Ovary (tissue), 10 donors: ENCODE measurements at regions of chr11 and their contacts with region 1.

Region 1: DNA sequence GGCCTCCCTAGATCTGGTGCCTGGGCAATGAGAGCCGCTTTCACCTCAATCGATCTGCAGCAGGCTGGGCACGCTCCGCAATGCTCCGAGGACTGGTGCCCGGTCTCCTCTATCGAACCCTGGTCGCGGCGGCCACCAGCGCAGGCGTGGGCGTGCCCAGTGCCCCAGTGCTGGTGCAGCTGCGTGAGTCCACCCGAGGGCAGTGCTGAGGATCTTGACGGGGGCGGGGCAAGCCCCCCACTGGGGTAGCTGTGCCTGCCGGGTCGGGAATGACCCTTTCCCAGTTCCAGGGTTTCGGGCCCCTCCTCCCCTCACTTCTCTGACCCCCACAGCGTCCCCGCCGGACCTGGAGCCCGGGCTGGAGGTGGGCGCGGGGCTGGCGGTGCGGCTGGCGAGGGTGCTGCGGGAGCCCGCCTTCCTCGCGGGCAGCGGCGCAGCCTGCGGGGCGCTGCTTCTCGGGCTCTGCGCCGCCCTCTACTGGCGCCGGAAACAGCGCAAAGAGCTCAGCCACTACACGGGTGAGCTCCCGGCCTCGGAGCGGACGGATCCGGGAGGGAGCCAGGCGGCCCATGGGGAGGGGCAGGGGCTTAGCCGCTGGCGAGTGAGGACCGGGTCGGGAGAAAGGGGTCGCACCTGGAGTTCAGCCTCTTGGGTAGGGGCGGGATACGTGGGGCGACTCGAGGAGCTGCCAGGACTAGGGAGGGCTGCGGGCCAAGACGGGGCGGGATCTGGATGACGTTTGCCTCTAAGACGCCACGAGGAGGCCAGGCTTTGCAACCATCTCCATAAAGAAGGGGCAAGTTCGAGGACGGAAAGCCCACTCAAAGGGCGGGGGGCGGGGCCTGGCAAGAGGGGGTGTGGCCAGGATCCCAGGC is 10.9 kb downstream of the ROBO3 start:
- DNase-seq: peak; percentile 94 to 96 (median 96)
- H3K4me3 ChIP-seq: peak overlapping the region; percentile 67
- H3K27ac ChIP-seq: peak overlapping the region; percentile 90 to 96
- H3K4me1 ChIP-seq: peaks cover 9% of the 10 kb centered on the region
- H3K27me3 ChIP-seq: no peaks in the 10 kb centered on the region
- CTCF ChIP-seq: peak; percentile 94 to 95 (median 94)
- EP300 ChIP-seq: no peak
- POLR2A ChIP-seq: peak; percentile 47

Region 2: DNA sequence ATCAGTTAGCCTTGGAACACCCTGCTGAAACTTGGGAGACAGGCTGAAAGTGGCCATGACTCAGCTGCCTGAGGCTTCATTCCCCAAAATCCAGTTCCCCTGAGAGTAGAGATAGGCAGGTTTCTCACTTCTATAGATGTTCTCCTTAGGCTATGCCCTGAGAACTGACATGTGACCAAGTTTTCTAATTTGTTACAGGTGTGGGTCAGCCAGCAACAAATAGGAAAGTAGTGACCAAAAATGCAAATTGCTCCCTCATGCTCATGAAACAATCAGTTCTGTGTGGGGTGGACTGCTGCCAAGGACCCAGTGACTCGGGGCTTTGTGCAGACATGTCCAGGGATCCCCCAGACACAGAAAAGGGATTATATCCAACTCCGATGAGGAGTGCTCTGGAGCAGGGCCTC is 70.6 kb after region 1 on chr11:
- intact Hi-C with region 1: loop called in 3 of 4 experiments (anchors 5 to 10 kb)
- DNase-seq: no peak
- H3K4me3 ChIP-seq: no peak overlapping the region
- H3K27ac ChIP-seq: no peak overlapping the region
- H3K4me1 ChIP-seq: no peaks in the 10 kb centered on the region
- H3K27me3 ChIP-seq: no peaks in the 10 kb centered on the region
- CTCF ChIP-seq: no peak
- EP300 ChIP-seq: no peak
- POLR2A ChIP-seq: no peak

Region 3: DNA sequence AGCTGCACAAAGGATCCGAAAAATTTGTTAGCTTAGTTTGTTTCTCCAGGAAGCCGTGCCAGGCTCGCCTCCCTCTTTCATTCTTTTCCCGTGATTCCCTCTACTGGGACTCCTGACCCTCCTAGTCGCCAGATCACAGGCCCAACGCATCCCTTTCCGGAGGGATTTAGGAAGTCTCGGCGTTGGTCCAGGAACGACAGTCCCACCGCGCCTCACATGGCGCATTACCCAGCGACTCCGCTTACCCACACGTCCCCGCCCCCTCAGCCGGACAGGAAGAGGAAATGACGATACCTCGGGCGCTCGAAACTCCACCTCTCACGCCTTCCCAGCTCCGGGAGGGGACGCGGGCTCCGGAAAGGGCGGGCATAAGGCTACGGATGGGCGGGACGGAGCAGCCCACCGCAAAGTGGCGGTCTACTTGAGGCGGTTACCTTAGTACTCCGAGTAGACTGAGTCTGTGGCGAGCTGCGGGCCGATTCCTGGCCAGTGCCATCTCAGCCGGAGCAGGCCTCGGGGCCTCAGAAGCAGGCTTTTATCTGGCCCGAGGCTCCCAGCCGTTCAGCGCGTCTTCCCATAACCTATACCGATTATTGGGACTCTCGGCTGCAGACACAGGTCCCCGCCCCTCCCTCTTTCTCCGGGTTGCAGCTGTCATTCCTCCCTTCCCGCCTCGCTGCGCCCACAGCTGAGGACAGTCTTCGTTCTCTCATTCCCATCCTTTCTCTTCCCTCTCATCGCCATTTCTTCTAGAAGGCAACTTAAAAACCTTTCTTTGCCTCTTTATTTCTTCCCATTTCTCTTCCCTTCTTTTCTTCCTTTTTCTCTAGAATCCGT is 77.8 kb after region 1 on chr11 and contains the start of gene CCDC15:
- intact Hi-C with region 1: loop called (anchors 2 to 10 kb)
- DNase-seq: peak; percentile 96 to 97 (median 96)
- H3K4me3 ChIP-seq: peak within 1 kb of the TSS; percentile 55
- H3K27ac ChIP-seq: peak within 1 kb of the TSS in 1 of 2 donors; percentile 70
- H3K4me1 ChIP-seq: peaks cover 2% of the 10 kb centered on the region
- H3K27me3 ChIP-seq: no peaks in the 10 kb centered on the region
- CTCF ChIP-seq: no peak
- EP300 ChIP-seq: no peak
- POLR2A ChIP-seq: peak; percentile 97
- total RNA-seq, gene CCDC15: 0.87 to 1.9 (median 1.4) TPM

Region 4: DNA sequence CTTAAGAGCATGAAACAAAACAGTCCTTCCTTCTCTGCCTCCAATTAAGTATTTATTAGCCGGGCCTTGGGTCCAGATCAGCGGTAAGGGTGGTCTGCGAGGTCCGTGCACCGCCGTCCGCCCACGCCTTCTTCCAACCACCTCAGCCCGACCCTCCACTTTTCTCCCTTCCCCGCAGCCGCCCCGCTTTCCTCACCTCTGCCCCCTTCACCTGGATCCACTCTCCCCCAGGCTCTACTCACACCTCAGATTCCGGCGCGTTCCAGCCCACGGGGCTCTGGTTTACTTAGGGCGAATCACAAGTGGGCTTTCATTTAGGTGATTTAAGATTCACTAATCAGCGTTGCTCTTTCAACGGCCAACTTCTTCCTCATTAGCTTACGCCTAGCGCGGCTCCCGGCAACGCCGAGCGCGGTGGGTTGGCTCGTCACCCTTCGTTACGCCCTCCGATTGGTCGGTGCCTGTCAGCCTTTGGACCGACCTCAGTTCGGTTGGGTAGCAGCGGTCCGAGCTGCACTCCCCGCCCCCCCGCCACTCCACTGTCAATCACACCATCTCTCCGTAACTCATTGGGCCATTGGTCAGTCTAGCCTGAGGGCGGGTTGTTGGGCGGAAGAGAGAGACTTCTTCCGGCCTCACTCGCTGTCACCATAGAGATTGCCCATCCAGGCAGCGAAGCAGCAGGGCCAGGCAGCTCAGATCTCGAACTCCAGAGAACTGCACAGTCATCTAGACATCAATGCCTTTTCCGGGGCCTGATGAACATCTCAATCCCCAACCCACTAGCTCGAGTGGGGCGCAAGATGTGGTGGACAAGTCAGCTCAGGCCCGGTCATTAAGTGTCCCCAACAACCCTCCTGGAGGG is 235.4 kb after region 1 on chr11 and contains the start of gene TMEM218:
- intact Hi-C with region 1: loop called in 1 of 4 experiments (anchors 10 kb)
- DNase-seq: peak; percentile 98 to 99 (median 99)
- H3K4me3 ChIP-seq: peak within 1 kb of the TSS; percentile 73
- H3K27ac ChIP-seq: peak within 1 kb of the TSS in 1 of 2 donors; percentile 51
- H3K4me1 ChIP-seq: peaks cover 5% of the 10 kb centered on the region
- H3K27me3 ChIP-seq: no peaks in the 10 kb centered on the region
- CTCF ChIP-seq: no peak
- EP300 ChIP-seq: no peak
- POLR2A ChIP-seq: peak; percentile 44
- total RNA-seq, gene TMEM218: 13.0 to 20.6 (median 16.7) TPM